A673 (cell line): ENCODE measurements at regions of chr11 and their contacts with region 1.

Region 1: DNA sequence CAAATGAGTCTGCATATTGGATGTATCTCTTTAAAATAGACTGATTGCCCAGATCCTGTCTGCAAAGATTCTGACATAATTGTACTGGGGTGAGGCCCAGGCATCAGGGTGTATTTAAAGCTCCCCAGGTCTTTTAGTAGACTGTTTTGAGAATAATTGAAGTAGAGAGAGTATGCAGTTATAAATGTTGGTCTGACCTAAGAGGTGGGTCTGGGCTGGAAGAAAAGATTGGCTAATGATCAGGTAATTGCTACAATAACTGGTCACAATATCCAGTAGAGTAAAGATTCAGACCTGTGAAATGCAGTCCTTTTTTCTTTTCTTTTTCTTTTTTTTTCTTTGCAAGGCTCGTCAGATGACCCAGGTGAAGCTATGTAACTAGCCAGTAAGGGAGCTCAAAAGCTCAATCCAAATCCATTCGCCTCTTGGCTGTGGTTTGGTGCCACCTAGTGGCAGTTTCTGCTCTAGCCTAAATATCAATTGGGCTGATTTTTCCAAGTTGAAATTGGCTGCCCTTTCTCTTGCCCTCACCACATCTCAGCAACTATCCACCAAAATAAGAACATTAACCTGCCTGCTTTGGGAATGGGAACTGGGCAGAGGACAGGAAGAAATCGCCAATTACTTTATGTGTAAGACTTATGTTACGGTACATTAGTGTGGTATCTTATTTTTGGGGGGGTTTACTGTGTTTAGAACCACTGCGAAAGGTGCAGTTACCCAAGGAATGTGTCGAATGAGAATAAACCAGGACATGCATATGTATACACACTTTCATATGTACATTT is 45.9 kb downstream of the ZNF143 start:
- DNase-seq: peak; percentile 79
- H3K4me3 ChIP-seq: no peak overlapping the region
- H3K27ac ChIP-seq: no peak overlapping the region
- H3K4me1 ChIP-seq: no peaks in the 10 kb centered on the region
- H3K27me3 ChIP-seq: no peaks in the 10 kb centered on the region
- CTCF ChIP-seq: peak; percentile 86

Region 2: DNA sequence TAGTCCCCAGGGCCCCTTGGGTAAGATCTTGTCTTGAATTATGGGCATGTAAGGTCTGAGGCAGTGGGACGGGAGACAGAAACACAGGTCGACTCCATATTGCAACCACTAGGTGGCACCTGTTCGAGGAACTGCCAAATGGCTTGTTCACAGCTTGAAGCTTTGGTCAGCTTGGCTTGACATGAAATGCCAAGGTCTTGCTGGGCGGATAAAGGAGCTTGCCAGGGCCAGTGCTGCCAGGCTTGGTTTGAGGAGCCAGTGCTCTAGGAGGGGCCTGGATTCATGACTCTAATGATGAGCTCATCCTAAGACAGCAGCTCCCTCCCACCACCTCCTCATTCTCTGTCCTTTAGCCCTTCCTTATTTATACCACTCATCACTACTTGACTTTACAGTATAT is 491.0 kb before region 1 on chr11:
- CTCF ChIA-PET with region 1: interaction called, 13 read pairs
- POLR2A ChIA-PET with region 1: no interaction called
- intact Hi-C with region 1: loop called (anchors 2 kb)
- DNase-seq: peak; percentile 72
- H3K4me3 ChIP-seq: no peak overlapping the region
- H3K27ac ChIP-seq: no peak overlapping the region
- H3K4me1 ChIP-seq: no peaks in the 10 kb centered on the region
- H3K27me3 ChIP-seq: no peaks in the 10 kb centered on the region
- CTCF ChIP-seq: peak; percentile 76

Region 3: GRCh38 chr11:9160166-9160565 is 346.5 kb before region 1 on chr11:
- CTCF ChIA-PET with region 1: interaction called, 4 read pairs
- POLR2A ChIA-PET with region 1: no interaction called
- intact Hi-C with region 1: loop called (anchors 10 kb)
- DNase-seq: peak; percentile 28
- H3K4me3 ChIP-seq: no peak overlapping the region
- H3K27ac ChIP-seq: peak overlapping the region; percentile 47
- H3K4me1 ChIP-seq: peaks cover 9% of the 10 kb centered on the region
- H3K27me3 ChIP-seq: no peaks in the 10 kb centered on the region
- CTCF ChIP-seq: no peak

Region 4: GRCh38 chr11:9524001-9524400 is 17.3 kb after region 1 on chr11:
- CTCF ChIA-PET with region 1: interaction called, 12 read pairs
- POLR2A ChIA-PET with region 1: no interaction called
- intact Hi-C with region 1: no loop called
- DNase-seq: no peak
- H3K4me3 ChIP-seq: no peak overlapping the region
- H3K27ac ChIP-seq: no peak overlapping the region
- H3K4me1 ChIP-seq: peaks cover 20% of the 10 kb centered on the region
- H3K27me3 ChIP-seq: no peaks in the 10 kb centered on the region
- CTCF ChIP-seq: no peak

Region 5: DNA sequence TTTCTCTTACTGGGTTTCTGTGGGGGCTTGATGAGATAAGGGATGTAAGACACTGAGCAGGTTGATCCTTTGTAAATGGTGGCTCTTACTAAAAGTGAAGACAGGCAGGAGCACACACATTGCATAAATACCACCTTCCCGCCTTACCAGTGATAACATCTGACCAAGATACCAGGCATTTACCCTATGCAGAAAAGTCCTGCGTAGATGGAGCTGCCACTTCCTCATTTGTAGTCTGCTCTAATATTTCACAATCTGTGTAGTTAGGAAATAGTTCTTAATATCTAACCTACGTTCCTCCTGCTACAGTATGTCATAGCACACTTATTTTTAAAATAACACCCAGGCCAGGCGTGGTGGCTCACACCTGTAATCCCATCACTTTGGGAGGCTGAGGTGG is 133.3 kb after region 1 on chr11:
- CTCF ChIA-PET with region 1: no interaction called
- POLR2A ChIA-PET with region 1: no interaction called
- intact Hi-C with region 1: no loop called
- DNase-seq: no peak
- H3K4me3 ChIP-seq: no peak overlapping the region
- H3K27ac ChIP-seq: no peak overlapping the region
- H3K4me1 ChIP-seq: no peaks in the 10 kb centered on the region
- H3K27me3 ChIP-seq: no peaks in the 10 kb centered on the region
- CTCF ChIP-seq: no peak

Region 6: GRCh38 chr11:10004526-10005113 is 497.9 kb after region 1 on chr11:
- CTCF ChIA-PET with region 1: no interaction called
- POLR2A ChIA-PET with region 1: no interaction called
- intact Hi-C with region 1: no loop called
- DNase-seq: no peak
- H3K4me3 ChIP-seq: no peak overlapping the region
- H3K27ac ChIP-seq: no peak overlapping the region
- H3K4me1 ChIP-seq: no peaks in the 10 kb centered on the region
- H3K27me3 ChIP-seq: no peaks in the 10 kb centered on the region
- CTCF ChIP-seq: no peak